Ascending aorta (tissue), 2 donors: ENCODE measurements at regions of chrX and their contacts with region 1.

Region 1: DNA sequence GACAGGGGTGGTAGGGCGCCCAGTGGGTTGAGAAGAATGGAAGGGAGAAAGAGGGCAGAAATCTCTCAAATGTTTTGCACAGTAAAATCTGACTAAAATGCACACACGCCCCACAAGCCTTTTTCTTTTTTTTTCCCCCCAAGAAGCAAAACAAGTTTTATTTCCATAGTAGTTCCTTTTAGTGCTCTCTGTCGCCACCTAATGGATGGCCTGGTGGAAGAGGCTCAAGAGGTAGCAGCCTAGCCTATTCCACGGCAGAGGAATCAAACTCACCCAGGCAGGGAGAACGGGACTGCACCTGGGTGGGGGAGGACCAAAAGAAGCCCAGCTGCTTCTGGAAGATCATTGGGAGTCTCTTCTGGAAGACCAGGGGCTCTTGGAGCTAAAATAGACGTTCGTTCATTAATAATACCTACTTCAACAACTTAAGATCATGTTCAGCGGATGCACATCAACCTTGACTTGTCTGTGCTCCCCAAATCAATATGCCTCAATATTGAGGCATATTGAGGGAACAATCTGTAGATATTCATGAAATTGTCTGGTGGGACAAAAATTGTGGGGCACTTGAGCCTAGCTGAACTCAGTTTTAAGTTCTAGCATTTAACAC is 31.6 kb upstream of the IRAK1 start:
- DNase-seq: peak; percentile 27 to 85
- H3K4me3 ChIP-seq: no peak overlapping the region
- H3K27ac ChIP-seq: no peak overlapping the region
- H3K4me1 ChIP-seq: peaks cover 3 to 23% of the 10 kb centered on the region in 2 donors
- H3K27me3 ChIP-seq: no peaks in the 10 kb centered on the region
- CTCF ChIP-seq: peak; percentile 36 to 74 (median 70)

Region 2: DNA sequence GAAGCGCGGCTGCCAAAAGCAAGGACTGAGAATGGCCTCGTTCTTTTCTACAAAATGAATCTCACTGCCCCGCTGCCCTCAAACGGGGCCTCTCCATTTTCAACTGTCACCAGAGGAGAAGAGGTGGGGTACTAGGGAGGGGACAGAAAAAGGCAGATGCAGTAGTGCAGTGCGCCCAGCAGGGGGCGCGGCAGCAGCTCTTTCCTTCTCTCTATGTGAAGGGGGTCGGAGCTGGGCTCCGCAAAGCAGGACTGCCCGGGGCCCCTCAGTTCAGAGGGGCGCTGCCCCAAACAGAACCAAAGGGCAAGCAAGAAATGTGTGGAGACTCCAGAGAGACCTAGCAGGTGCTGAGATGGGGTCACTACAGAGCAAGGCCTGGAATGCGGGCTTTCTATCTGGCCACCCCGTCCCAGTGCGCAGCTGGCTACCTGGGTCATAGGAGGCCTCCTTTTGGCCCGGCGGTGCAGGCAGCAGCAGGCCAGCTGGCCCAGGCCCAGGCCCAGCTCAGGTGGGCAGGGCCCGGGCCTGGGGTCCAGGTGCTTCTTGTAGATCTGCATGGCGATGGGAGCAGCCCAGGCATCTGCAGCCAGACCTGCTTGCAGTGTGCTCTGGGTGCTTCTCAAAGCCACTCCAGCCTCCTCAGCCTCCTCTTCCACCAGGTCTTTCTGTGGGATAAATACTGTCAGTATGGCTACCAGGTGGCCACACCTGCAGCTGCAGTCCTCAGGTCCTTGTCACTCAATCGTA is 37.5 kb before region 1 on chrX:
- intact Hi-C with region 1: loop called (anchors 2 kb)
- DNase-seq: no peak
- H3K4me3 ChIP-seq: no peak overlapping the region
- H3K27ac ChIP-seq: no peak overlapping the region
- H3K4me1 ChIP-seq: no peaks in the 10 kb centered on the region
- H3K27me3 ChIP-seq: no peaks in the 10 kb centered on the region
- CTCF ChIP-seq: peak; percentile 71 to 94 (median 88)

Region 3: DNA sequence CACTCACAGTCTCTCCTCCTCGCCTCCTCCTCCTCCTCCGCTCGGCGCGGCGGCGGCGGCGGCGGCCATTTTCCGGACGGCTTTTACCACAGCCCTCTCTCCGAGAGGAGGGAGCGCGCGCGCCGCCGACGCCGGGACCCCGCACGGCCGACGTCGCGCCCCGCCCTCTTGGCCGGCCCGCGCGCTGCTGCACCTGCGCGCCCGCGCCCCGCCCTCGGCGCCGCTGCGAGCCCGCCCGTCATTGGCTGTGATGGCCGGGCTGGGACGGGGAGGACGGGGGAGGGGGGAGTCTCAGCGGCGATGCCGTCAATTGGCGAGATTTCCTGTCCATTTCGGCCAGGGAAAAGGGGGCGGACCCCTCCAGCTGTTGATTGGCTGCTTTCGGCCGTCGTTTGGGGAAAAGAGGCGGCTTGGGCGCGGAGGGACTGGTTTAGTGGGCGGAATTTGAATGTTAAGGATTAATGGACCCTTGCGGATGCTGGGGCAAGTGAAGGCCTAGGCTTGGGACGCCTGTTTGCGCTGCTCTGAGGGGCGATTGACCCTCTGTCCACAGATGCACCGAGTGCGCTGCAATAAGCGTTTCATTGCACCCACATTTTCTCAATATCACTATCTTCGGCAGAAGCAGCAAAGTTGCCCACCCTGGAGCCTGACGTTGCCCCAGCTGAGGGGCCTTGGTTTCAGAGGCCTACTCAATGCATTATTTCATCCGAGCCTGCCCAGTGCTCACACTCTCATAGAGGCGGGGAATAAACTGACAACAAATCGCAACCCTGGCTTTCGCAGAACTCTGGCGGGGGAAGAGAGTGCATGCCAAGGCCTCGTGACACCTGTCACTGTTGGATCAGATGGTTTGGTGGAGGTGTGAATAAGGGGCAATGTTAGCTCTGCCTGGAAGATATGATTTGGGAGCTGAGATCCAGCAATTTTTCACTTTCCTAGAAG is 46.6 kb after region 1 on chrX and contains the start of gene MECP2:
- intact Hi-C with region 1: loop called (anchors 5 kb)
- DNase-seq: peak; percentile 71 to 94
- H3K4me3 ChIP-seq: peak within 1 kb of the TSS; percentile 66 to 94
- H3K27ac ChIP-seq: peak within 1 kb of the TSS; percentile 98 to 99
- H3K4me1 ChIP-seq: peaks cover 0 to 9% of the 10 kb centered on the region in 2 donors
- H3K27me3 ChIP-seq: no peaks in the 10 kb centered on the region
- CTCF ChIP-seq: no peak
- total RNA-seq, gene MECP2: 65.7 TPM